ENCODE measurements at regions of chr1 and their contacts with region 1.

Region 1: GRCh38 chr1:27111626-27112573 is 43.0 kb downstream of the SLC9A1 start:
- DNase-seq: peak; percentile 83
- ATAC-seq: peak; percentile 95
- H3K4me3 Mint-ChIP-seq: peak overlapping the region; percentile 59
- H3K27ac Mint-ChIP-seq: peak overlapping the region; percentile 91
- H3K4me1 Mint-ChIP-seq: peaks cover 76% of the 10 kb centered on the region
- H3K27me3 Mint-ChIP-seq: no peaks in the 10 kb centered on the region

Region 2: DNA sequence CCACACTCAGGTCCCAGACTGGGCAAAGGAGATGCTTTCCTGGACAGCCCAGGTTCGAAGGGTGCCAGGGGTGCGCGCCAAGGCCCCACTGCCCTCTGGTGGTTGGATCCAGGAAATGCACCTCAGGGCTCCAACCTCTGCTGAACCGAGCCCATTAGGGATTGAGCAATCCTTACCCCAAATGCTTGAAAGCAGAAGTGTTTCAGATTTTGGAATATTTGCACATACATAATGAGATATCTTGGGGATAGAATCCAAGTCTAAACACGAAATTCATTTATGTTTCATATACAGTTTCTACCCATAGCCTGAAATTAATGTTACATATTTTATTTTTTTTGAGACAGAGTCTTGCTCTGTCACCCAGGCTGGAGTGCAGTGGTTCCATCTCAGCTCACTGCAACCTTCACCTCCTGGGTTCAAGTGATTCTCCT is 14.4 kb before region 1 on chr1:
- CTCF ChIA-PET with region 1: interaction called, 13 read pairs
- POLR2A ChIA-PET with region 1: no interaction called
- DNase-seq: peak; percentile 85
- ATAC-seq: peak; percentile 84
- H3K4me3 Mint-ChIP-seq: no peak overlapping the region
- H3K27ac Mint-ChIP-seq: no peak overlapping the region
- H3K4me1 Mint-ChIP-seq: peaks cover 21% of the 10 kb centered on the region
- H3K27me3 Mint-ChIP-seq: no peaks in the 10 kb centered on the region

Region 3: DNA sequence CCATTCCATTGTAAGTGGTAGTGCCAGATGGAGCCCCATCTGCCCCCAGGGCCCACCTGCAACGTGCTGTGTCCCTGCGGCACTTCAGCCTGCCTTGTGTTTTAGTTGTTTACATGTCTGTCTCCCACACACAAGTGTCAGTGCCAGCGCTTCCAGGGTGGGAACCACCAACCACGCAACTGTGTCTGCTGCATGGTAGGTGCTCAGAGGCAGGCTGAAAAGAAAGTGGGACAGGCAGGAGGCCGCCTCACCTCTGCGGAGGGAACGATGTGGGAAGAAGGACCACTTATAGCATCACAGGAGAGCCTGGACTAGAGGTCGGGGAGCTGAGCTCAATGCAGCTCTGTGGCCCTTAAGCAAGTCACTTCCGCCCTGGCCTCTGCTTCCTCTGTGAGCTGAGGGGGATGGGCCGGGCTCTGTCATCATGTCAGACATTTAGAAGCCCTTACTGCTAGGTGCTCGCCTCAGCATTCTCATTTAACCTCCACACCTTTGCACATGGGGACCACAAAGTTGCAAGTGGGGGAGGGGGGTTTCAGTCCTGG is 25.2 kb after region 1 on chr1:
- CTCF ChIA-PET with region 1: interaction called, 64 read pairs
- POLR2A ChIA-PET with region 1: interaction called, 11 read pairs
- DNase-seq: peak; percentile 93
- ATAC-seq: peak; percentile 92
- H3K4me3 Mint-ChIP-seq: peak overlapping the region; percentile 82
- H3K27ac Mint-ChIP-seq: peak overlapping the region; percentile 99
- H3K4me1 Mint-ChIP-seq: peaks cover 58% of the 10 kb centered on the region
- H3K27me3 Mint-ChIP-seq: no peaks in the 10 kb centered on the region

Region 4: DNA sequence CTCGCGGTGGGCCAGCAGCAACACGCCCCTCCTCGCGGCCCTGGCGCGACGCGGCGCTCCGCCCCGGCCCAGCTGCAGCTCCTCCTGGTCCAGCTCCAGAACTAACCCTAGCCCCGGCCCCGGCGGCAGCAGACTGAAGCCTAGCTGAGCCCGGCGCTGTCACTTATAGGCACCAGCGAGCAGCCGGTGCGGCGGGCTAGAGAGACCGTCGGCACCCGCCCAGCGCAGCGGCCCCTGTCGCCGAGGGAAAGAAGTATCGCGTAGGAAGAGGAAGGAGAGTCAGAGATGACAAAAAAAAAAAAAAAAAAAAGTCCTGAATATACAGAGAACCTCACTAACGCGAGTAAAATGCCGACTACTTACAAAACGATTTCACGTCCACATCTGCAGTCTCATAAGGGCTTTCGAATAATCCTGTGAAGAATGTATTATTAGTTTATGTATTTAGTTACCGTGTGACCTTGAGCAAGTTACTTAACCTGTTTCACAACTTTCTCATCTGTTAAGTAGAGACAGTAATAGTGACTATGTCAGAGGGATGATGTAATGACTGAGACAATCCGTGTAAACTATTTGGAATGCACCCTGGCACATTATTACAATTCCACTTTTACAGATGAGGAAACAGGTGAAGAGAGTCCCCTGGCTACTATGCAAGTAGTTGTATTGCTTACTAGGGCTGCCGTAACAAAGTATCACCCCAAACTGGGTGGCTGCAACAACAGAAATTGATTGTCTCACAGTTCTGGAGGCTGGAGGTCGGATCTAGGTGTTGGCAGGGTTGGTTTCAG is 43.3 kb after region 1 on chr1 and contains the start of gene SLC9A1:
- CTCF ChIA-PET with region 1: interaction called, 83 read pairs
- POLR2A ChIA-PET with region 1: interaction called, 36 read pairs
- DNase-seq: peak; percentile 92
- ATAC-seq: peak; percentile 90
- H3K4me3 Mint-ChIP-seq: peak within 1 kb of the TSS; percentile 81
- H3K27ac Mint-ChIP-seq: peak within 1 kb of the TSS; percentile 94
- H3K4me1 Mint-ChIP-seq: peaks cover 44% of the 10 kb centered on the region
- H3K27me3 Mint-ChIP-seq: no peaks in the 10 kb centered on the region
- total RNA-seq, gene SLC9A1: 28.3 to 29.0 TPM

Region 5: DNA sequence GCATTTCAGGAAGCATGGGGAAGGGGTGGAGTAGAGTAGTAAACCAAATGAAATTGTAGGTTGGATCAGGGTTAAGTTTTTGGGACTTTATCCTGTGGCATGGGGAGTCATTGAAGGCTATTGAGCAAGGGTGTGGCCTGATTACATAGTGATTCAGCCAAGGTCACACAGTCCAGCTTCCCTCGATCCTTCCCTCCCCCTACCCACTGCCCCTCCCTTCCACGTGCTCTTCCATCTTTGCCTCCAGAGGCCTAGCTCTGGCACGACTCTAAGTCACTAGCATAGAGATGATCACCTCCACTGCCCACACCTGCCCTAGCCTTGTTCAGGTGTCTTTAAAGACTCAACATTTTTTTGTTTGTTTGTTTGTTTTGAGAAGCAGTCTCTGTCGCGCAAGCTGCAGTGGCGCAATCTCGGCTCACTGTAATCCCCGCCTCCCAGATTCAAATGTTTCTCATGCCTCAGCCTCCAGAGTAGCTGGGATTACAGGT is 80.2 kb after region 1 on chr1:
- CTCF ChIA-PET with region 1: interaction called, 17 read pairs
- POLR2A ChIA-PET with region 1: no interaction called
- DNase-seq: no peak
- ATAC-seq: no peak
- H3K4me3 Mint-ChIP-seq: no peak overlapping the region
- H3K27ac Mint-ChIP-seq: no peak overlapping the region
- H3K4me1 Mint-ChIP-seq: no peaks in the 10 kb centered on the region
- H3K27me3 Mint-ChIP-seq: peaks cover 6% of the 10 kb centered on the region

Region 6: DNA sequence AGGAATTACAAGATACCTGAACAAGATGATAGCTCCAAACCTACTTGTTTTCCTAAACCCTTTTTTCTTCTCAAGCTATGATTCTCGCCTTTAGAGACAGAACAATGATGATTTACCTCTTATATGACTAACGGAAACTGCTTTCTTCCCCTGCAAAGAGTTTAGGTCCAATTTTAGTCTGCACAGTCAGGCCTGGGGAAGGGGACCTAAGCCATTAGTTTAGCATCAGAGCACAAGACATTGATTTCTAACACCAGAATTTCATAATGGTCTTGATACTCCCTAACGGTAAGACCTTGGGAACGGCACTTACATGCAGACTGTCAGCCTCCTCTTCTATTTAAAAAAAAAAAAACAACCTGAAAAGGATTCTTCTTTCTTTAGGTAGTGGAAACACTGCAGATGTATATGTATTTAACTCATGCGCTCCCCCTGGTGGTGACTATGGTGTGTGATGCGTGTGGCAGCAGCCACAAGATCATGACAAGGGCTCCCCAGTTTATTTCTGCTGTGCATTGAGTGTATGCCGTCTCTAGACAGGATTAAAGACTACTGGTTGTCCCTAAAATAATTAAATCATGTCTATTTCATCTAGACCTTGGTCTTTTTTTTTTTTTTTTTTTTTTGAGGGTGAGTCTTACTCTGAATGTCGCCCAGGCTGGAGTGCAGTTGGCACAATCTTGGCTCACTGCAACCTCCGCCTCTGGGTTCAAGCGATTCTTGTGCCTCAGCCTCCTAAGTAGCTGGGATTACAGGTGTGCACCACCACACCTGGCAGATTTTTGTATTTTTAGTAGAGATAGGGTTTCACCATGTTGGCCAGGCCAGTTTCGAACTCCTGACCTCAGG is 172.7 kb after region 1 on chr1:
- CTCF ChIA-PET with region 1: interaction called, 23 read pairs
- POLR2A ChIA-PET with region 1: no interaction called
- DNase-seq: peak; percentile 93
- ATAC-seq: peak; percentile 98
- H3K4me3 Mint-ChIP-seq: no peak overlapping the region
- H3K27ac Mint-ChIP-seq: no peak overlapping the region
- H3K4me1 Mint-ChIP-seq: peaks cover 6% of the 10 kb centered on the region
- H3K27me3 Mint-ChIP-seq: no peaks in the 10 kb centered on the region

Measured in activated CD8-positive, alpha-beta T cell treated with anti-CD3 and anti-CD28 coated beads, Interleukin-2, amount 10 ng/mL, durations not matched to agents 7 days and 5 days (primary cell).